B cell (primary cell): ENCODE measurements at regions of chr19 and their contacts with region 1.

Region 1: GRCh38 chr19:2648528-2648937 is 54.0 kb downstream of the GNG7 start:
- DNase-seq: peak; percentile 87
- ATAC-seq: peak; percentile 81
- H3K4me3 ChIP-seq: no peak overlapping the region
- H3K4me3 Mint-ChIP-seq: no peak overlapping the region
- H3K27ac ChIP-seq: no peak overlapping the region
- H3K27ac Mint-ChIP-seq: peak overlapping the region; percentile 50
- H3K4me1 ChIP-seq: peaks cover 8 to 38% of the 10 kb centered on the region in 2 donors
- H3K4me1 Mint-ChIP-seq: peaks cover 47% of the 10 kb centered on the region
- H3K27me3 ChIP-seq: no peaks in the 10 kb centered on the region
- H3K27me3 Mint-ChIP-seq: no peaks in the 10 kb centered on the region
- CTCF ChIP-seq: peak; percentile 93

Region 2: GRCh38 chr19:2636897-2637683 is 11.4 kb before region 1 on chr19:
- CTCF ChIA-PET with region 1: interaction called, 12 read pairs
- POLR2A ChIA-PET with region 1: interaction called, 5 read pairs
- intact Hi-C with region 1: no loop called
- DNase-seq: peak; percentile 85
- ATAC-seq: peak; percentile 74
- H3K4me3 ChIP-seq: no peak overlapping the region
- H3K4me3 Mint-ChIP-seq: peak overlapping the region; percentile 47
- H3K27ac ChIP-seq: no peak overlapping the region
- H3K27ac Mint-ChIP-seq: peak overlapping the region; percentile 74
- H3K4me1 ChIP-seq: peaks cover 52 to 74% of the 10 kb centered on the region in 2 donors
- H3K4me1 Mint-ChIP-seq: peaks cover 81% of the 10 kb centered on the region
- H3K27me3 ChIP-seq: no peaks in the 10 kb centered on the region
- H3K27me3 Mint-ChIP-seq: no peaks in the 10 kb centered on the region
- CTCF ChIP-seq: peak; percentile 71

Region 3: DNA sequence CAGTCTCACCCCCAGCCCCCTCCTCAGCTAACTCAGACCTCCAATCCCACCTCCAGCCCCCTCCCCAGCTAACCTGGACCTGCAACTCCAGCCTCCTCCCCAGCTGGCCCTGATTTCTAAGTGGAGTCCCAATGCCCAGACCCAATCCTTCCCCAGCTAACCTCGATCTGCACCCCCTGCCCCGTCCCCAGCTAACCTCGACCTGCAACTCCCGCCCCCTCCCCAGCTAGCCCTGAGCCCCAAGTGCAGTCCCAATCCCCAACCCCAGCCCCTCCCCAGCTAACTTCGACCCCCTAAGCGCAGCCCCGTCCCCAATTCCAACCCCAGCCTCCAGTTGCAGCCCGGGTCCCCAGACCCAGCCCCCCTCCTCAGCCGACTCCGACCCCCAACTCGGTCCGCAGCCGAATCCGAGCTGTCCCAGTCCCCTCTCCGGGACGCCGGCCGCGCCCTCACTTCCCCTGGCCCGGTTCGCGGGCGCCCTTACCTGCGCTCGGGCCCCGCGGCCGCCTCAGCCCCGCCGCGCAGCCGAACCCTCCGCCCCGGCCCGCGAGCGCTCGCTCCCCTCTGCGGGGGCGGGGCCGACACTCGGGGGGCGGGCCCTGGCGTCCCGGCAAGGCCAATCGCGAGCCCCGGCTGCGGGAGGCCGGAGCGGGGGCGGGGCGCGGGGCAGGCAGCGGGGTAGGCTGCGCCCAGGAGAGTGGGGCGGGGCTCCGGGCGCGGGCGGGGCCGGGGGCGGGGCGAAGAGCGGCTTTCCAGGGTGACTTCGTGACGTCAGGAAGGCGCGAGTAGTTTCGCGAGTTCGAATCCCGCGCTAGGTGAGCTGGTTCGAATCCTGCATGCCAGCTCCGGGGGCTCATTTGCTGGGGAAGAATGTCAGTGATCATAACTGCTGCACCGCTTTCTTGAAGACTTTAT is 53.9 kb after region 1 on chr19 and contains the start of gene GNG7:
- CTCF ChIA-PET with region 1: interaction called, 45 read pairs
- POLR2A ChIA-PET with region 1: interaction called, 5 read pairs
- intact Hi-C with region 1: no loop called
- DNase-seq: peak; percentile 94
- ATAC-seq: peak; percentile 98
- H3K4me3 ChIP-seq: peak within 1 kb of the TSS; percentile 58 to 96 (median 77)
- H3K4me3 Mint-ChIP-seq: peak within 1 kb of the TSS; percentile 89
- H3K27ac ChIP-seq: peak within 1 kb of the TSS; percentile 81 to 89
- H3K27ac Mint-ChIP-seq: peak within 1 kb of the TSS; percentile 94
- H3K4me1 ChIP-seq: peaks cover 46 to 50% of the 10 kb centered on the region in 2 donors
- H3K4me1 Mint-ChIP-seq: peaks cover 37% of the 10 kb centered on the region
- H3K27me3 ChIP-seq: no peaks in the 10 kb centered on the region
- H3K27me3 Mint-ChIP-seq: no peaks in the 10 kb centered on the region
- CTCF ChIP-seq: no peak
- total RNA-seq, gene GNG7: 153 and 160 TPM in 2 replicates

Region 4: DNA sequence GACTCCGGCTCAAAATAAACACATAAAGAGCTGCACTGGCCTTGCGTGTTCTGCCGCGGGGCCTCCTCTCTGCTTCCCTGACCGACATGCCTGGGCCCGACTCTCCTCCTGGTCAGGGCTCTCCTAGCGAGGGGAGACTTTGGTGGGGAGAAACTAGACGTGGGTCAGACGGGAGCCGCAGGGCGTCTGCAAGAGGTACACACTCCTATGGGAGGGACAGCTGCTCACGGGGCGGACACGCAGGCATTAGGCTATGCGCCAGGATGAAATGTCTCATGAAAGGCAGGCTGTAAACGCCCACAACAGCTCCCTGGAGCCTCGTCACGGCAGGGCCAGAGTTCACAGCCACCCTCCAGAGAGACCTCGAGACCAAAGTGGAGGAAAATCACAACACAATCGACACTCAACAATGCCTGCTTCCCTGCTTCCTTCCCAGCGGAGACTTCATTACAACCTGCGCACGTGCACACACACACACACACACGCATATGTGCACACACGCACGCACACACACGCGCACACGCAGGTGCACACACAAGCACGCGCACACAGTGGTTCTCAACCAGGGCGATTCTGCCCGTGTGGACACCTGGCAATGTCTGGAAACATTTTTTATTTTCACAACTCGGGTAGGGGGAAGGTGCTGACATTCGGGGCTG is 85.5 kb after region 1 on chr19:
- CTCF ChIA-PET with region 1: interaction called, 20 read pairs
- POLR2A ChIA-PET with region 1: interaction called, 4 read pairs
- intact Hi-C with region 1: no loop called
- DNase-seq: no peak
- ATAC-seq: no peak
- H3K4me3 ChIP-seq: no peak overlapping the region
- H3K4me3 Mint-ChIP-seq: no peak overlapping the region
- H3K27ac ChIP-seq: no peak overlapping the region
- H3K27ac Mint-ChIP-seq: peak overlapping the region; percentile 20
- H3K4me1 ChIP-seq: peaks cover 4 to 12% of the 10 kb centered on the region in 2 donors
- H3K4me1 Mint-ChIP-seq: peaks cover 24% of the 10 kb centered on the region
- H3K27me3 ChIP-seq: no peaks in the 10 kb centered on the region
- H3K27me3 Mint-ChIP-seq: no peaks in the 10 kb centered on the region
- CTCF ChIP-seq: no peak

Region 5: DNA sequence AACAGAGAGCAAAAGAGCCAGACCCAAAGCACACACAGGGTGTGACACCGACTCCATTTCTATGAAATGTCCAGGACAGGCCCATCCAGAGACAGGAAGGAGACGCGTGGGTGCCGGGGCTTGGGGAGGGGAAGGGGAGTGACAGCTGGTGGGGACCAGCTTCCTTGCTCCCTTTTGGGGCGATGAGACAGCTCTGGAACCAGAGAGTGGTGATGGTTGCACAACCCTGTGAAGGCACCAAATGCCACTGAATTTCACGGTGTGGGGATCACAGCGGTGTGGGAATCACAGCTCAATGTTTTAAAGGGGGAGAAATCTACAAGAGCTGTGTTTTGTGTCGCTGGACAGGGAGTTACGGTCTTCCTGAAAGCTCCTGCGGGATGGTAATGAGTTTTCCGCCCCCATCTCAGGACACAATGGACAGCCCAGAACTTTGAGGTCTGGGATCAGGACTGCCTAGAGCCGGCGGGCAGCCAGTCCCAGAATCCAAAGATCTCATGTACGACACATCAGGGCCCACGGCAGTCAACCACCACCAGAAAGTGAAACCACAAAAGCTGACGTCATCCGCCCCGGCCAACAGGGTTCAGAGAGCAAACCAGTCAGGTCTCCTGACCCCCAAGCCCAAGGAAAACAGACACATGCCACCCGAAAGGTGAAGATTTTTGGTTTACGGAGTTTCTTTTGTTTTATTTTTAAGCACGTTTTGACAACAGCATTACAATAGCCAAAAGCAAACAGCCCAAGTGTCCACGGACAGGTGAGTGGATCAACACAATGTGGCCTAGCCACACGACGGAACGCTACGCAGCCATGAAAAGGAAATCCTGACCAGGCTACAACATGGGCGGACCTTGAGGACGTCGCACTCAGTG is 127.3 kb after region 1 on chr19:
- CTCF ChIA-PET with region 1: interaction called, 16 read pairs
- POLR2A ChIA-PET with region 1: no interaction called
- intact Hi-C with region 1: no loop called
- DNase-seq: peak; percentile 77
- ATAC-seq: peak; percentile 60
- H3K4me3 ChIP-seq: peak overlapping the region in 4 of 5 experiments; percentile 28 to 48 (median 40)
- H3K4me3 Mint-ChIP-seq: peak overlapping the region; percentile 87
- H3K27ac ChIP-seq: peak overlapping the region; percentile 80 to 86
- H3K27ac Mint-ChIP-seq: peak overlapping the region; percentile 96
- H3K4me1 ChIP-seq: peaks cover 11 to 22% of the 10 kb centered on the region in 2 donors
- H3K4me1 Mint-ChIP-seq: peaks cover 39% of the 10 kb centered on the region
- H3K27me3 ChIP-seq: no peaks in the 10 kb centered on the region
- H3K27me3 Mint-ChIP-seq: no peaks in the 10 kb centered on the region
- CTCF ChIP-seq: no peak